GM12878 (cell line): ENCODE measurements at regions of chr14 and their contacts with region 1.

Region 1: GRCh38 chr14:80996049-80996901 is 40.9 kb downstream of the TSHR start:
- DNase-seq: no peak
- ATAC-seq: peak; percentile 92
- H3K4me3 ChIP-seq: no peak overlapping the region
- H3K27ac ChIP-seq: no peak overlapping the region
- H3K4me1 ChIP-seq: no peaks in the 10 kb centered on the region
- H3K27me3 ChIP-seq: no peaks in the 10 kb centered on the region
- CTCF ChIP-seq: peak; percentile 53 to 59 (median 56)
- EP300 ChIP-seq: no peak
- POLR2A ChIP-seq: no peak
- RAD21 ChIP-seq: peak; percentile 73

Region 2: DNA sequence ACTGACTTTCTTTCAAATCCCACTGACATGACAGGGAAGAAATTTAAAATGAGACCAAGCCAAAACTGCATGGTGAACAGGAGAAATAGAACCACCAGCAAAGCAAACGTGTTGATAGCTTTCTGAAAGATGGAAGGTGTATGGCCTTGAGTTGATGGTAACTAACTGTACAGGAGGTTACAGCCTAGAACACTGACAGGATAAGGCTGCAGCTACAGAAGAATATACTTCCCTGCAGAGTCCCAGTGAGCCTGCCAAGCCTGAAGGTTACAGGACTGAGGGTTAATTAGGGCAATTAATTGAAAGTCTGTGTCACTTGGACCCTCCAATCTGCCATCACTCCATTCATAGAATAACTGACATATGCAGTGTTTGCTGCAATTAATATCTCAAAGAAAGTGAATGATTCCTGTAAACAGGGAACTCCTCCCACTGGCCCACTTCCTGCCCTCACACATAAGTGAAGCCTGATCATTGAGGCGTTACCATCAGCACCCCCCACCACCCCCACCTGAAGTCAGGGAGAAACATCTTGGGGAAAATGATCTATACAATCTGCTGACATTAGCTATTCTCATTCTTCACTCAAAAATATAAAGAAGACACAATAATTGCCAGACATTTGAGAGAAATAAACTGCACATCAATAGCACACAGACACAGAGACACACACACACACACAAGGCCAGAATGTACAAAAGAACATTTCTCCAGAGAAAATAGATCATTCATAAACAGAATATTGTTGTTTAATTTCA is 151.0 kb after region 1 on chr14:
- CTCF ChIA-PET with region 1: interaction called, 10 read pairs
- POLR2A ChIA-PET with region 1: interaction called, 3 read pairs
- RAD21 ChIA-PET with region 1: no interaction called
- SMC1A ChIA-PET with region 1: interaction called, 8 read pairs
- in situ Hi-C with region 1: no loop called
- intact Hi-C with region 1: no loop called
- DNase-seq: no peak
- ATAC-seq: peak; percentile 44; the same call in 2 of the 3 replicates
- H3K4me3 ChIP-seq: no peak overlapping the region
- H3K27ac ChIP-seq: no peak overlapping the region
- H3K4me1 ChIP-seq: peaks cover 9% of the 10 kb centered on the region
- H3K27me3 ChIP-seq: no peaks in the 10 kb centered on the region
- CTCF ChIP-seq: no peak
- EP300 ChIP-seq: no peak
- POLR2A ChIP-seq: no peak
- RAD21 ChIP-seq: no peak

Region 3: DNA sequence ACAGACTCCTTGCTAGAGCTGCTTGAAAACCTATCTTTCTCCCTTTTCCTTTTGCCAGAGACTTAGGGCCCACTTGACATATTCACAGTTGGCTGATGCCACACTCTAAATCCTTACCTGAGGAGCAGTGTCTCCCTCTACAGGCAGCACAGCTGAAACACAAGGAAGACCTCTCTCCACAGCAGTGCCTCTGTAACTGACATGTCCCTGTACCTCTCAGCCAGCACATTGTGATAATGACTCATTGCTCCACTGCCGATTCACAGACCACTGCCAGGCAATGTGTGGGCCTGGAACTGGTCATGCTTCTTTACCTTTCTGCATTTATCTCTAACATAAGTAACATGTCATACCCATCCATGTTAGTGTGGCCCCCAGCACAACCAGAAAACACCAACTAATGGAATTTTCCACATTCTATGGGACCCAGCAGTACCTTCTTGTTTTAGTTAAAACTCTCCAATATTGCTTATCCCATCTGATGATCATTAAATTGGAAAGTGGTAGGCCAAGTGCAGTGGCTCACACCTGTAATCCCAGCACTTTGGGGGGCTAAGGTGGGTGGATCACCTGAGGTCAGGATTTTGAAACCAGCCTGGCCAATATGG is 168.0 kb after region 1 on chr14:
- CTCF ChIA-PET with region 1: interaction called, 96 read pairs
- POLR2A ChIA-PET with region 1: no interaction called
- RAD21 ChIA-PET with region 1: interaction called, 25 read pairs
- SMC1A ChIA-PET with region 1: interaction called, 27 read pairs
- in situ Hi-C with region 1: no loop called
- intact Hi-C with region 1: loop called (anchors 1 kb)
- DNase-seq: peak; percentile 48
- ATAC-seq: peak; percentile 97
- H3K4me3 ChIP-seq: no peak overlapping the region
- H3K27ac ChIP-seq: no peak overlapping the region
- H3K4me1 ChIP-seq: 0 out of 2 replicates have a peak, but pooled peaks cover 2% of the 10 kb centered on the region
- H3K27me3 ChIP-seq: no peaks in the 10 kb centered on the region
- CTCF ChIP-seq: peak; percentile 77 to 79 (median 77)
- EP300 ChIP-seq: no peak
- POLR2A ChIP-seq: no peak
- RAD21 ChIP-seq: peak; percentile 89

Region 4: DNA sequence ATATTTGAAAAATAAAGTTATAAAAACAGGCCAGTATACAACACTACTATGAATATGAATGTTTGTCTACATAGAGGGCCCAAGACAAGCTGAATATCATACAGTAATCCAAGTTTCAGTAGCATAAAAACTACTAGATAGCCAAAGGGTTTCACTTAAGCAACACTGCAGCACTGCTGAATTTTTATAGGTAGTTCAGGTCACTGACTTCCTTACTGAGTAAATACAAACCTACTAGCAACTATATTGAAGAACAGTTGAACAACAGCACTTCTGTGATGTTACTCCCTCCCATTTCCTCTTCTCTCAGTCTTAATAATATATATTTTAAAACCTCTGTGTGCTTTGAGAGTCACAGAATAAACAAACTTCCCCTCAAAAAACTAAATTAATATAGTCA is 181.8 kb after region 1 on chr14:
- CTCF ChIA-PET with region 1: interaction called, 69 read pairs
- POLR2A ChIA-PET with region 1: no interaction called
- RAD21 ChIA-PET with region 1: no interaction called
- SMC1A ChIA-PET with region 1: interaction called, 3 read pairs
- in situ Hi-C with region 1: loop called (anchors 5 kb)
- intact Hi-C with region 1: no loop called
- DNase-seq: no peak
- ATAC-seq: no peak
- H3K4me3 ChIP-seq: no peak overlapping the region
- H3K27ac ChIP-seq: peak overlapping the region; percentile 66; the same call in 1 of the 2 replicates
- H3K4me1 ChIP-seq: peaks cover 16% of the 10 kb centered on the region
- H3K27me3 ChIP-seq: no peaks in the 10 kb centered on the region
- CTCF ChIP-seq: no peak
- EP300 ChIP-seq: no peak
- POLR2A ChIP-seq: no peak
- RAD21 ChIP-seq: no peak

Region 5: DNA sequence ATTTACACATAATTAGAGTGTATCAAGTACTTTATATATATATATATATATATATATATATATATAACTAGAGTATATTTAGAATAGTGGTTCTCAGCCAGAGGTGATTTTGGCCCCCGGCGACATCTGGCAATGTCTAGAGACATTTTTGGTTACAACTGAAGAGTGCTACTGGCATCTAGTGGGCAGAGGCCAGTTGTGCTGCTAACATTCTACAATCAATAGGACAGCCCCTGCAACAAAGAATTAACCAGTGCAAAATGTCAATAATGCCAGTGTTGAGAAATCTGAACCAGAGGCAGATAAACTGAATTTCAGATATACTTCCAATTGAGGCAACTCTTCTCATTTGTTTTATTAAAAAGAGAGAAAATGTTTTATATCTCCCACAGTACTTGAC is 215.6 kb after region 1 on chr14:
- CTCF ChIA-PET with region 1: interaction called, 10 read pairs
- POLR2A ChIA-PET with region 1: no interaction called
- RAD21 ChIA-PET with region 1: interaction called, 3 read pairs
- SMC1A ChIA-PET with region 1: interaction called, 8 read pairs
- in situ Hi-C with region 1: no loop called
- intact Hi-C with region 1: loop called (anchors 2 kb)
- DNase-seq: no peak
- ATAC-seq: peak; percentile 79
- H3K4me3 ChIP-seq: no peak overlapping the region
- H3K27ac ChIP-seq: no peak overlapping the region
- H3K4me1 ChIP-seq: peaks cover 8% of the 10 kb centered on the region
- H3K27me3 ChIP-seq: no peaks in the 10 kb centered on the region
- CTCF ChIP-seq: peak; percentile 36 to 54 (median 41); a peak in 5 of 6 replicates
- EP300 ChIP-seq: no peak
- POLR2A ChIP-seq: no peak
- RAD21 ChIP-seq: peak; percentile 68

Region 6: GRCh38 chr14:81633496-81633895 is 637.2 kb after region 1 on chr14:
- CTCF ChIA-PET with region 1: no interaction called
- POLR2A ChIA-PET with region 1: no interaction called
- RAD21 ChIA-PET with region 1: no interaction called
- SMC1A ChIA-PET with region 1: no interaction called
- in situ Hi-C with region 1: no loop called
- intact Hi-C with region 1: no loop called
- DNase-seq: no peak
- ATAC-seq: no peak
- H3K4me3 ChIP-seq: no peak overlapping the region
- H3K27ac ChIP-seq: no peak overlapping the region
- H3K4me1 ChIP-seq: no peaks in the 10 kb centered on the region
- H3K27me3 ChIP-seq: no peaks in the 10 kb centered on the region
- CTCF ChIP-seq: no peak
- EP300 ChIP-seq: no peak
- POLR2A ChIP-seq: no peak
- RAD21 ChIP-seq: no peak